GM12878 (cell line): ENCODE measurements at regions of chr3 and their contacts with region 1.

Region 1: DNA sequence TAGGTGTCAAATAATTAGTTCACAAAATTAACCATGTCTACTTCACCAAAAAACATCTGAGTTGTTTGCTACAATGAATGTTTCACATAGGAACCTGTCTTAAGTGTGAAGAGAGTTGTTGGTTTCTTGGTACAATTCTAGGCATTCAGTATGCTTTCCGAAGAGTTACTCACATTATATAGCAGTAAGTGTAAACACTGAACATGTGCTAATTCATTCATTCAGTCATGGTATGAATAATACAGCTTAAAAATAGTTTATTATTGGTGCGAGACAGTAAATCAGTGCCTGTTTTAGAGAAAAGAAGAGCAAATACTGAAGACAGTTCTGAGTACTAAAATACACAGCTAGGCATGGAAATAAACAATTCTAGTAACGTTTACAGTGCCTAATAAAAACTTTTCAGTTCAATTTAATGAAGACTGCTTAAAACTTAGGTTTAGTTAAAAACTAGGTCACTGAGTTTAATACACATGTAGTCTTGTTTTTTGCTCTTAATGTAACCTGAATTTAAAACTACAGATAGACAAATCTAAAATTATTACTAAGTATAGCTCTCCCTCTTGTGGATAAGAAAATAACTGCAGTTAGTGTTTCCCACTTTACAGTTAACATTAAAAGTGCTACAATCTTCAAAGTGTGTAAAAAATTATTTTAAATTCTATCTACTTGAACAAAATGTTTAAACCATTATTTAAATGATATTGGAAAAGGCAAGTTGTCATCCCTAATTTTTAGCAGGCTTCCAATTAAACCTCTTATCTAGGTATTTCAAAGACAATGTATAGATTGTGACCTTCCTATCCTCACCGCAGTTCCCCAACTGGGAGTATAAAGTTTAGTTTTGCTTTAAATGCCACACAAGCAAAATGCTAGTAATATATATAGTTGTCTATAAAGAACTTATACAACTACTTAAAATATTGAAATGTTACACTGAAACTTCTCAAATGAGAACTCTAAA is 20.1 kb upstream of the ZCWPW2 start:
- DNase-seq: no peak
- ATAC-seq: peak; percentile 32; the same call in 2 of the 3 replicates
- H3K4me3 ChIP-seq: no peak overlapping the region
- H3K27ac ChIP-seq: no peak overlapping the region
- H3K4me1 ChIP-seq: no peaks in the 10 kb centered on the region
- H3K27me3 ChIP-seq: no peaks in the 10 kb centered on the region
- CTCF ChIP-seq: peak in 2 of 3 experiments; percentile 28 to 60; a peak in 4 of 6 replicates
- EP300 ChIP-seq: no peak
- POLR2A ChIP-seq: no peak
- RAD21 ChIP-seq: peak; percentile 49

Region 2: GRCh38 chr3:27681245-27681748 is 647.2 kb before region 1 on chr3:
- CTCF ChIA-PET with region 1: interaction called, 24 read pairs
- POLR2A ChIA-PET with region 1: no interaction called
- RAD21 ChIA-PET with region 1: interaction called, 9 read pairs
- SMC1A ChIA-PET with region 1: interaction called, 20 read pairs
- in situ Hi-C with region 1: no loop called
- intact Hi-C with region 1: no loop called
- DNase-seq: peak; percentile 38
- ATAC-seq: peak; percentile 87
- H3K4me3 ChIP-seq: no peak overlapping the region
- H3K27ac ChIP-seq: no peak overlapping the region
- H3K4me1 ChIP-seq: no peaks in the 10 kb centered on the region
- H3K27me3 ChIP-seq: no peaks in the 10 kb centered on the region
- CTCF ChIP-seq: peak; percentile 47 to 79 (median 61)
- EP300 ChIP-seq: no peak
- POLR2A ChIP-seq: no peak
- RAD21 ChIP-seq: peak; percentile 91

Region 3: GRCh38 chr3:28012830-28013229 is 315.6 kb before region 1 on chr3:
- CTCF ChIA-PET with region 1: interaction called, 19 read pairs
- POLR2A ChIA-PET with region 1: interaction called, 8 read pairs
- RAD21 ChIA-PET with region 1: interaction called, 14 read pairs
- SMC1A ChIA-PET with region 1: interaction called, 12 read pairs
- in situ Hi-C with region 1: no loop called
- intact Hi-C with region 1: loop called (anchors 5 kb)
- DNase-seq: no peak
- ATAC-seq: no peak
- H3K4me3 ChIP-seq: no peak overlapping the region
- H3K27ac ChIP-seq: no peak overlapping the region
- H3K4me1 ChIP-seq: no peaks in the 10 kb centered on the region
- H3K27me3 ChIP-seq: no peaks in the 10 kb centered on the region
- CTCF ChIP-seq: no peak
- EP300 ChIP-seq: no peak
- POLR2A ChIP-seq: no peak
- RAD21 ChIP-seq: no peak

Region 4: DNA sequence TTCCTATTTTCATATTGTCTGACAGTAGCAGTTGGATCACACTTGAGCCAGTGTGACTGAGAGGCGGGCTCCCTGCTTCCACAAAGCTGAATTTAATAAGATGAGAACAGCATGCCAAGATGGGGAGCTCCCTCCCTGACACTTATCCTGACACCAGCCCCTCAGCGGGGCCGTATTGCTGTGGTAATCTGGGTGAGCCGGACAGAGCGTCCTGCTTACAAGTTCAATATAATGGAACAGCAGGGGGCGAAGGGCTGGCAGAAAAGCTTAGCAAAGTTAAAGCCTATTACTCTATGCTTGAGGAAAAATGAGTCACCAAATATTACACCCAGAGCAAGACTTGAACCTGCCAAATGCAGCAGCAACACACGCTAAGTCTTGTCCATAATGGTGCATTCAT is 250.9 kb before region 1 on chr3:
- CTCF ChIA-PET with region 1: interaction called, 3 read pairs
- POLR2A ChIA-PET with region 1: no interaction called
- RAD21 ChIA-PET with region 1: interaction called, 9 read pairs
- SMC1A ChIA-PET with region 1: interaction called, 11 read pairs
- in situ Hi-C with region 1: no loop called
- intact Hi-C with region 1: no loop called
- DNase-seq: no peak
- ATAC-seq: no peak
- H3K4me3 ChIP-seq: no peak overlapping the region
- H3K27ac ChIP-seq: no peak overlapping the region
- H3K4me1 ChIP-seq: no peaks in the 10 kb centered on the region
- H3K27me3 ChIP-seq: no peaks in the 10 kb centered on the region
- CTCF ChIP-seq: no peak
- EP300 ChIP-seq: no peak
- POLR2A ChIP-seq: no peak
- RAD21 ChIP-seq: no peak

Region 5: DNA sequence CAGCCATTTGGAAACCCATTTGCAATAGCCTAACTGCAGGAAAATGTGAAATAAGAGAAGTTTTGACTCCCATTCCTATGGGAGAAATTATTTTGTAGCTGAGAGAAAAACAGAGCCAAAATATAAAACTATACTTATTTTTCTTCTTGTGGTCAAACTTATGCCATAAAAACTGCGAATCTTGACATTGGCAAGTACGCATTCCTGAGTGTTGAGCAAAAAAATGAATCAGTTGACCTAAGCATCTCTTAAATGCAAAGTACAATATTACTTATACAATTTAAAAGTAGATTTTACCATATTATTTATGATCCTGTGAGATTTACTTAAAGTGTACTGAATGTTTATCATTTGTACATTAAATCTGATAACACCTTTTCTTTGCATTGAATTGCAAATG is 137.1 kb before region 1 on chr3:
- CTCF ChIA-PET with region 1: no interaction called
- POLR2A ChIA-PET with region 1: no interaction called
- RAD21 ChIA-PET with region 1: no interaction called
- SMC1A ChIA-PET with region 1: no interaction called
- in situ Hi-C with region 1: no loop called
- intact Hi-C with region 1: no loop called
- DNase-seq: no peak
- ATAC-seq: no peak
- H3K4me3 ChIP-seq: no peak overlapping the region
- H3K27ac ChIP-seq: no peak overlapping the region
- H3K4me1 ChIP-seq: no peaks in the 10 kb centered on the region
- H3K27me3 ChIP-seq: no peaks in the 10 kb centered on the region
- CTCF ChIP-seq: no peak
- EP300 ChIP-seq: no peak
- POLR2A ChIP-seq: no peak
- RAD21 ChIP-seq: no peak

Region 6: GRCh38 chr3:28218071-28218916 is 110.2 kb before region 1 on chr3:
- CTCF ChIA-PET with region 1: no interaction called
- POLR2A ChIA-PET with region 1: no interaction called
- RAD21 ChIA-PET with region 1: interaction called, 24 read pairs
- SMC1A ChIA-PET with region 1: interaction called, 16 read pairs
- in situ Hi-C with region 1: no loop called
- intact Hi-C with region 1: no loop called
- DNase-seq: peak; percentile 28
- ATAC-seq: peak; percentile 91
- H3K4me3 ChIP-seq: no peak overlapping the region
- H3K27ac ChIP-seq: no peak overlapping the region
- H3K4me1 ChIP-seq: no peaks in the 10 kb centered on the region
- H3K27me3 ChIP-seq: no peaks in the 10 kb centered on the region
- CTCF ChIP-seq: no peak
- EP300 ChIP-seq: peak; percentile 78 to 88; a peak in 3 of 4 replicates
- POLR2A ChIP-seq: no peak
- RAD21 ChIP-seq: no peak

Region 7: GRCh38 chr3:28295898-28296490 is 32.5 kb before region 1 on chr3:
- CTCF ChIA-PET with region 1: interaction called, 6 read pairs
- POLR2A ChIA-PET with region 1: no interaction called
- RAD21 ChIA-PET with region 1: interaction called, 4 read pairs
- SMC1A ChIA-PET with region 1: interaction called, 19 read pairs
- in situ Hi-C with region 1: no loop called
- intact Hi-C with region 1: no loop called
- DNase-seq: no peak
- ATAC-seq: peak; percentile 62
- H3K4me3 ChIP-seq: no peak overlapping the region
- H3K27ac ChIP-seq: no peak overlapping the region; the same call in 1 of the 2 replicates
- H3K4me1 ChIP-seq: no peaks in the 10 kb centered on the region
- H3K27me3 ChIP-seq: no peaks in the 10 kb centered on the region
- CTCF ChIP-seq: no peak
- EP300 ChIP-seq: no peak
- POLR2A ChIP-seq: no peak
- RAD21 ChIP-seq: no peak

Region 8: GRCh38 chr3:28348629-28349483 is 20.4 kb after region 1 on chr3 and contains the starts of genes AZI2 and ZCWPW2:
- CTCF ChIA-PET with region 1: interaction called, 35 read pairs
- POLR2A ChIA-PET with region 1: interaction called, 12 read pairs
- RAD21 ChIA-PET with region 1: interaction called, 44 read pairs
- SMC1A ChIA-PET with region 1: interaction called, 37 read pairs
- in situ Hi-C with region 1: no loop called
- intact Hi-C with region 1: no loop called
- DNase-seq: peak; percentile 74
- ATAC-seq: peak; percentile 92
- H3K4me3 ChIP-seq: peak within 1 kb of the TSS; percentile 81
- H3K27ac ChIP-seq: peak within 1 kb of the TSS; percentile 97
- H3K4me1 ChIP-seq: no peaks in the 10 kb centered on the region
- H3K27me3 ChIP-seq: no peaks in the 10 kb centered on the region
- CTCF ChIP-seq: peak; percentile 20 to 43 (median 23); a peak in 4 of 6 replicates
- EP300 ChIP-seq: peak in 1 of 2 experiments; percentile 53; a peak in 1 of 4 replicates
- POLR2A ChIP-seq: peak; percentile 88
- RAD21 ChIP-seq: no peak
- polyA plus RNA-seq, gene AZI2: 33.4 to 36.2 TPM
- polyA plus RNA-seq, gene ZCWPW2: 0.31 to 0.37 TPM

Region 9: DNA sequence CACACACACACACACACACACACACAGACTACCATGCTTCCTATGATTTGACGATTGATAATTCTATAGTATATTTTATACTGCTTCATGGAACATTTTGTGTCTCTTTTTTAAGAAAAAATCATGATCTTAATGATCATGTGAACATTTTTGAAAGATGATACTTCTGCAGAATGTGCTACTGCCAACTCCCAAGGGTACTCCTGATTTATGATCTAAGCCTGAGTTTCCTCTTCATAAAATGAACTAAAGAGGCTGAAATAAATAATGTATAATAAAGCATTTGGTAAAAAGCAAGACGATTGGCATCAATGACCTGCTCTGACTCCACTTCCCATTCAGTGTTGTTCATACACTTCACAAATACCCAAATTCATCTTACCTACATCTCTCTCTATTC is 618.6 kb after region 1 on chr3:
- CTCF ChIA-PET with region 1: no interaction called
- POLR2A ChIA-PET with region 1: no interaction called
- RAD21 ChIA-PET with region 1: no interaction called
- SMC1A ChIA-PET with region 1: no interaction called
- in situ Hi-C with region 1: no loop called
- intact Hi-C with region 1: no loop called
- DNase-seq: no peak
- ATAC-seq: no peak
- H3K4me3 ChIP-seq: no peak overlapping the region
- H3K27ac ChIP-seq: no peak overlapping the region
- H3K4me1 ChIP-seq: no peaks in the 10 kb centered on the region
- H3K27me3 ChIP-seq: no peaks in the 10 kb centered on the region
- CTCF ChIP-seq: no peak
- EP300 ChIP-seq: no peak
- POLR2A ChIP-seq: no peak
- RAD21 ChIP-seq: no peak

Region 10: DNA sequence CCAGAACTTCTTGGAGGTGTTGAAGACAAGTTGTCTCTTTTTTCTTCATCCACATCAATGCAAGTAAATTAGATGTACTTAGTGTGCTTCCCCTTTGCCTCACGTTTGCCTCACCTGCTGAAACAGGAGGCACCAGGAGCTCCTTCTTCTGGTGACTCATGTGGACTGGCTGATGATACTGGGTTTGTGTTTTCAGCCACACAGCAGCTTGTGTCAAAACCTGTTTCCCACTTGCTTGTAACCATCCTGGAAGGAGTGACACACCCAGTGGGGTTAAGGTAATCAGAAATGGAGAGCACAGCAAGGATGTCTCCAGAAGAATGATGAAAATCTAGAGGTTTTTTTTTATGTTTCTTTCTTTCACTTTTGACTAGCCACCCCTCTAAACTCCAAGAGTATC is 809.1 kb after region 1 on chr3:
- CTCF ChIA-PET with region 1: no interaction called
- POLR2A ChIA-PET with region 1: no interaction called
- RAD21 ChIA-PET with region 1: no interaction called
- SMC1A ChIA-PET with region 1: no interaction called
- in situ Hi-C with region 1: no loop called
- intact Hi-C with region 1: no loop called
- DNase-seq: no peak
- ATAC-seq: no peak
- H3K4me3 ChIP-seq: no peak overlapping the region
- H3K27ac ChIP-seq: no peak overlapping the region
- H3K4me1 ChIP-seq: no peaks in the 10 kb centered on the region
- H3K27me3 ChIP-seq: no peaks in the 10 kb centered on the region
- CTCF ChIP-seq: no peak
- EP300 ChIP-seq: no peak
- POLR2A ChIP-seq: no peak
- RAD21 ChIP-seq: no peak